Activated CD4-positive, alpha-beta T cell treated with anti-CD3 and anti-CD28 coated beads for 36 hours (primary cell): ENCODE measurements at regions of chr17 and their contacts with region 1.

Region 1: DNA sequence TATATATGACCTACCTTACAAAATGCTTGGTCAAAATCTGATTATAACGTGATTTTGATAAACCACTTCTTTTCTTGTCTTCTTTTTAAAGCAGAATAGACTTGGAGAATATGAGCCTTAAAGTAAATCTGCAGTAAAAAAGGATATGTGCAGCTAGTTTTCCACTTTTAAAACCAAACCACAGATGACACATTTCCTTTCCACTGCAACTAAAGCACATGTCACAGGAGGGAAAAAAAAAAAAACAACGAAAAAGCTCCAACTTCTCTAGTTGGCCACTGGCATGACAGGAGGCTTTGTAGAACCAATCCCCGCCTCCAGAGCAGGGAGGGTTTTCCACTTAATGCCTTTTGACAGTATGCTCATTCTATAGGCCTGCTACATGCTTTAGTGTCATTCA is at the start of gene EVI2A:
- DNase-seq: peak; percentile 86
- ATAC-seq: peak; percentile 88
- H3K4me3 Mint-ChIP-seq: peak within 1 kb of the TSS; percentile 72
- H3K27ac Mint-ChIP-seq: peak within 1 kb of the TSS; percentile 95
- H3K4me1 Mint-ChIP-seq: peaks cover 32% of the 10 kb centered on the region
- H3K27me3 Mint-ChIP-seq: no peaks in the 10 kb centered on the region
- total RNA-seq, gene EVI2A: 16.9 to 18.2 TPM

Region 2: DNA sequence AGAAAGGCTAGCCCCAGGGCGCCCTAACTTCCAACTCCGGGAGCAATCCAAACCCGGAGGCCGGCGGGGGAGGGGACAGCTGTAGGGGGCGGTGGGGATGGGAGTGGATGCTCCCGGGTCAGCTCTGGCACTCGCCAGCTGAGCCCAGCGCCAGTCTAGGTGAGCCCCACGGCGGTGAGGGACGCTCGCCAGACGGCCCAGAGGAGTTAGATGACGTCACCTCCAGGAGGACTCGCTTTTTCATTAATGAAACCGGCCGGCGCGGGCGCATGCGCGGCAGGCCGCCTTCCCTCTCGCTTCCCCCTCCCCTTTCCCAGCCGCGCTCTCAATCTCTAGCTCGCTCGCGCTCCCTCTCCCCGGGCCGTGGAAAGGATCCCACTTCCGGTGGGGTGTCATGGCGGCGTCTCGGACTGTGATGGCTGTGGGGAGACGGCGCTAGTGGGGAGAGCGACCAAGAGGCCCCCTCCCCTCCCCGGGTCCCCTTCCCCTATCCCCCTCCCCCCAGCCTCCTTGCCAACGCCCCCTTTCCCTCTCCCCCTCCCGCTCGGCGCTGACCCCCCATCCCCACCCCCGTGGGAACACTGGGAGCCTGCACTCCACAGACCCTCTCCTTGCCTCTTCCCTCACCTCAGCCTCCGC is 226.8 kb before region 1 on chr17 and contains the start of gene NF1:
- CTCF ChIA-PET with region 1: no interaction called
- POLR2A ChIA-PET with region 1: no interaction called
- intact Hi-C with region 1: loop called in 1 of 2 experiments (anchors 1 kb)
- DNase-seq: peak; percentile 94
- ATAC-seq: peak; percentile 89
- H3K4me3 Mint-ChIP-seq: peak within 1 kb of the TSS; percentile 94
- H3K27ac Mint-ChIP-seq: peak within 1 kb of the TSS; percentile 94
- H3K4me1 Mint-ChIP-seq: peaks cover 11% of the 10 kb centered on the region
- H3K27me3 Mint-ChIP-seq: no peaks in the 10 kb centered on the region
- total RNA-seq, gene NF1: 22.1 to 26.2 TPM

Region 3: GRCh38 chr17:31349454-31349853 is 28.0 kb after region 1 on chr17:
- CTCF ChIA-PET with region 1: no interaction called
- POLR2A ChIA-PET with region 1: no interaction called
- intact Hi-C with region 1: no loop called
- DNase-seq: no peak
- ATAC-seq: no peak
- H3K4me3 Mint-ChIP-seq: no peak overlapping the region
- H3K27ac Mint-ChIP-seq: no peak overlapping the region
- H3K4me1 Mint-ChIP-seq: no peaks in the 10 kb centered on the region
- H3K27me3 Mint-ChIP-seq: no peaks in the 10 kb centered on the region

Region 4: GRCh38 chr17:31373150-31374093 is 51.9 kb after region 1 on chr17:
- CTCF ChIA-PET with region 1: interaction called, 3 read pairs
- POLR2A ChIA-PET with region 1: no interaction called
- intact Hi-C with region 1: loop called in 1 of 2 experiments (anchors 2 kb)
- DNase-seq: peak; percentile 27
- ATAC-seq: peak; percentile 85
- H3K4me3 Mint-ChIP-seq: no peak overlapping the region
- H3K27ac Mint-ChIP-seq: no peak overlapping the region
- H3K4me1 Mint-ChIP-seq: peaks cover 22% of the 10 kb centered on the region
- H3K27me3 Mint-ChIP-seq: no peaks in the 10 kb centered on the region

Region 5: GRCh38 chr17:31494259-31495021 is 173.0 kb after region 1 on chr17:
- CTCF ChIA-PET with region 1: no interaction called
- POLR2A ChIA-PET with region 1: no interaction called
- intact Hi-C with region 1: loop called in 1 of 2 experiments (anchors 5 kb)
- DNase-seq: peak; percentile 82
- ATAC-seq: peak; percentile 86
- H3K4me3 Mint-ChIP-seq: peak overlapping the region; percentile 58
- H3K27ac Mint-ChIP-seq: peak overlapping the region; percentile 97
- H3K4me1 Mint-ChIP-seq: peaks cover 91% of the 10 kb centered on the region
- H3K27me3 Mint-ChIP-seq: no peaks in the 10 kb centered on the region

Region 6: GRCh38 chr17:31549525-31550388 is 228.3 kb after region 1 on chr17:
- CTCF ChIA-PET with region 1: interaction called, 3 read pairs
- POLR2A ChIA-PET with region 1: no interaction called
- intact Hi-C with region 1: loop called in 1 of 2 experiments (anchors 2 kb)
- DNase-seq: peak; percentile 95
- ATAC-seq: peak; percentile 81
- H3K4me3 Mint-ChIP-seq: peak overlapping the region; percentile 88
- H3K27ac Mint-ChIP-seq: peak overlapping the region; percentile 82
- H3K4me1 Mint-ChIP-seq: peaks cover 17% of the 10 kb centered on the region
- H3K27me3 Mint-ChIP-seq: no peaks in the 10 kb centered on the region

Region 7: DNA sequence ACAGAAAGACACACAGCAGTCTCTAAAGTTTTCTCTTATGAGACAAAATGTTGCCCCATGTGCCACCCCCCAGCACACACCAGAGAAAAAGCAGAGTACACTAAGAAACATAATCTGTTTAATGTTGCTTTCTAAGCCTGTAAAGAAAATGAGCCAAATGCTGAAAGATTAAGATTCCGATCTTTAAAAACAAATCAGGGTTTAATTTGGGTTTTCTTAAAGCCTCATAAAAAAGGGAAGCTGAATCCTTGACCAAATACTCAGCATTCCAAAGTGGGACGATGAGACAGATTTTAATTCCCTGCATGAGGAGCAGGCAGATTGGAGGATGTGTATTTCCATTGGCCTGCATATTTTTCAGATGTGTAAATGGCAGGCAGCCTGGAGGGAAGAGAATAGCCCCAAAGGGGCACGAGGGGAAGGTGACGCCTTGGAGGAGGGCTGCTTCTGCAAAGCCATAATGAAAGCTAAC is 419.2 kb after region 1 on chr17:
- CTCF ChIA-PET with region 1: no interaction called
- POLR2A ChIA-PET with region 1: no interaction called
- intact Hi-C with region 1: no loop called
- DNase-seq: no peak
- ATAC-seq: no peak
- H3K4me3 Mint-ChIP-seq: no peak overlapping the region
- H3K27ac Mint-ChIP-seq: no peak overlapping the region
- H3K4me1 Mint-ChIP-seq: no peaks in the 10 kb centered on the region
- H3K27me3 Mint-ChIP-seq: peaks cover 11% of the 10 kb centered on the region

Region 8: DNA sequence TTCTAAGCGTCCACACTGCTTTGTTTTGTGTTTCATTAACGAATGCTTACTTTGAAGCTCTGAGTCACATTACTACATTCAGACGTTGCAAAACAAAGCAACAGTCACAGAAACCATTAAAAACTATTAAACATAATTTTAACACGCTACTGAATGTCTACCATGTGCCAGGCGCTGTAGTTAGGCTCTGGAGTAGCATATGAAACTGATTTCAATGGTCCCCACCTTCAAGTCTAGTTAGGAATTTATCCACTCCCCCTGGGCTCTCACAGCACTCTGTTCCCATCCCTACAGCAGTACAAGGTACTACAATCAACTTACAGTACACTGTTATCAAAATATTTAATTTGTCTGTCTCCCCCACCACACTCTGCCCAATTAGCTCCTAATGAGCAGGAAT is 579.4 kb after region 1 on chr17:
- CTCF ChIA-PET with region 1: no interaction called
- POLR2A ChIA-PET with region 1: no interaction called
- intact Hi-C with region 1: loop called in 1 of 2 experiments (anchors 5 kb)
- DNase-seq: no peak
- ATAC-seq: no peak
- H3K4me3 Mint-ChIP-seq: no peak overlapping the region
- H3K27ac Mint-ChIP-seq: no peak overlapping the region
- H3K4me1 Mint-ChIP-seq: peaks cover 17% of the 10 kb centered on the region
- H3K27me3 Mint-ChIP-seq: no peaks in the 10 kb centered on the region